ENCODE measurements at regions of chr12 and their contacts with region 1.

Region 1: GRCh38 chr12:112900299-112901145 is 6.2 kb upstream of the OAS1 start:
- DNase-seq: peak; percentile 39 to 59 (median 45)
- H3K4me3 ChIP-seq: no peak overlapping the region
- H3K4me3 Mint-ChIP-seq: peak overlapping the region in 1 of 8 donors; percentile 2
- H3K27ac ChIP-seq: no peak overlapping the region
- H3K27ac Mint-ChIP-seq: peak overlapping the region in 6 of 7 donors; percentile 13 to 70 (median 58)
- H3K4me1 ChIP-seq: peaks cover 23% of the 10 kb centered on the region
- H3K4me1 Mint-ChIP-seq: peaks cover 18 to 39% (median 24%) of the 10 kb centered on the region in 4 donors
- H3K27me3 ChIP-seq: no peaks in the 10 kb centered on the region
- H3K27me3 Mint-ChIP-seq: peaks cover 0 to 7% of the 10 kb centered on the region in 2 donors

Region 2: DNA sequence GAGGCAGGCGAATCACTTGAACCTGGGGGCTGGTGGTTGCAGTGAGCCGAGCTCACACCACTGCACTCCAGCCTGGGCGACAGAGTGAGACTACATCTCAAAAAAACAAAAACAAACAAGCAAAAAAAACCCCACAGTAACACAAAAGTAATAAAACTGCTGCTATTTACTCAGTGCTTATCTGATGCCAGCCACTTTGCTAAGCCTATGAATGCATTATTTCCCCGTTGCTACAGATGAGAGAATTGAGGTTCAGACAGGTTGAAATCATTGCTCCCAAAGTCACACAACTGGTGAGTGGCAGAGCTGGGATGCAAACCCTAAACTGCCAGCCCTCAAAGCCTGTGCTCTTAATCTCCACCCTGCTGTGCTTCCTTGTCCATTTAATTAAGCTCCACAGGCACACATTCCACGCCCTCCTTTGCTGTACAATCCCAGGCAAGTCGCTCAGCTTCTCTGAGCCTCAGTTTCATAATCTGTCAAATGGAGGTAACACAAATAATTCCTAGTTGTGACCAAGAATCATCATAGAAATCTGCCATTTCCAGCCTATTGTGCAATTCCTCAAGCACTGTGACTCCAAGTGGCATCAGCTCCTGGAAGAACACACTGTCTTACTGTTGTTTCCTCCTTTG is 32.1 kb after region 1 on chr12:
- CTCF ChIA-PET with region 1: interaction called, 14 read pairs
- POLR2A ChIA-PET with region 1: interaction called, 10 read pairs
- intact Hi-C with region 1: no loop called
- DNase-seq: no peak
- H3K4me3 ChIP-seq: no peak overlapping the region
- H3K4me3 Mint-ChIP-seq: no peak overlapping the region
- H3K27ac ChIP-seq: no peak overlapping the region
- H3K27ac Mint-ChIP-seq: peak overlapping the region in 4 of 7 donors; percentile 5 to 79 (median 62)
- H3K4me1 ChIP-seq: peaks cover 5% of the 10 kb centered on the region
- H3K4me1 Mint-ChIP-seq: peaks cover 6 to 14% (median 11%) of the 10 kb centered on the region in 4 donors
- H3K27me3 ChIP-seq: no peaks in the 10 kb centered on the region
- H3K27me3 Mint-ChIP-seq: no peaks in the 10 kb centered on the region

Region 3: DNA sequence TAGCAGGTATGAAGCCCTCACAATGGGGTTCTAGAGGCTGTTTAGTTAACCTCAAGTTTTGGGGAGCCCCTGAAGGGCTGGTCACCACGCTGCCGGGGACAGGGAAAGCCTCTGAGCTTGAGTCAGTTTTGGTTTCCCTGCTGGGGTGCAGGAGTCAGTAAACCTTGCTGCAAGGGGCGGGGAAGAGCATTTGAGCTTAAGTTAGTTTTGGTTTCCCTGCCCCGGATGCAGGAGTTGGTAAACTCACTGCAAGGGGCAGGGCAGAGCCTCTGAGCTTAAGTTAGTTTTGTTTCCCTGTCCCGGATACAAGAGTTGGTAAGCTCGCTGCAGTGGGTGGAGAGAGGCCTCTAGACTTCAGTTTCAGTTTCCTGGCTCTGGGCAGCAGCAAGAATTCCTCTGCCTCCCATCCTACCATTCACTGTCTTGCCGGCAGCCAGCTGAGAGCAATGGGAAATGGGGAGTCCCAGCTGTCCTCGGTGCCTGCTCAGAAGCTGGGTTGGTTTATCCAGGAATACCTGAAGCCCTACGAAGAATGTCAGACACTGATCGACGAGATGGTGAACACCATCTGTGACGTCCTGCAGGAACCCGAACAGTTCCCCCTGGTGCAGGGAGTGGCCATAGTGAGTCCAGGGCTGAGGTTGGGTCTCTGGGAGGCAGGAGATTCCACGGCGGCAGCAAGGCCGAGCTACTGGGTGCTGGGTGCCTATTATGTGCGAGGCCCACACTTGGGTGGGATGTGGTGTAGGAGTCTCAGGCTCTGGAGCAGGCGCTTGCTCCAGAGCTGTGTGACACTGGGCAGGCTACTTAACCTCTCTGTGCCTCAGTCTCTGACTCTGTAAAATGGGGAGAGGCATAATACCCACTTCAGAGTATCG is 77.9 kb after region 1 on chr12 and contains the start of gene OAS2:
- CTCF ChIA-PET with region 1: interaction called, 43 read pairs
- POLR2A ChIA-PET with region 1: interaction called, 144 read pairs
- intact Hi-C with region 1: loop called (anchors 1 kb)
- DNase-seq: peak; percentile 82 to 92 (median 87)
- H3K4me3 ChIP-seq: peak within 1 kb of the TSS; percentile 87 to 88
- H3K4me3 Mint-ChIP-seq: peak within 1 kb of the TSS; percentile 88 to 100 (median 99)
- H3K27ac ChIP-seq: peak within 1 kb of the TSS; percentile 91
- H3K27ac Mint-ChIP-seq: peak within 1 kb of the TSS; percentile 97 to 99 (median 99)
- H3K4me1 ChIP-seq: peaks cover 51% of the 10 kb centered on the region
- H3K4me1 Mint-ChIP-seq: peaks cover 28 to 58% (median 45%) of the 10 kb centered on the region in 4 donors
- H3K27me3 ChIP-seq: no peaks in the 10 kb centered on the region
- H3K27me3 Mint-ChIP-seq: no peaks in the 10 kb centered on the region
- total RNA-seq, gene OAS2: 73.5 to 77.4 TPM

Region 4: GRCh38 chr12:113030875-113031525 is 130.5 kb after region 1 on chr12:
- CTCF ChIA-PET with region 1: interaction called, 72 read pairs
- POLR2A ChIA-PET with region 1: no interaction called
- intact Hi-C with region 1: loop called (anchors 1 kb)
- DNase-seq: peak in 4 of 5 donors; percentile 24 to 35 (median 32)
- H3K4me3 ChIP-seq: no peak overlapping the region
- H3K4me3 Mint-ChIP-seq: no peak overlapping the region
- H3K27ac ChIP-seq: no peak overlapping the region
- H3K27ac Mint-ChIP-seq: no peak overlapping the region
- H3K4me1 ChIP-seq: no peaks in the 10 kb centered on the region
- H3K4me1 Mint-ChIP-seq: peaks cover 0 to 5% (median 3%) of the 10 kb centered on the region in 4 donors
- H3K27me3 ChIP-seq: no peaks in the 10 kb centered on the region
- H3K27me3 Mint-ChIP-seq: peaks cover 0 to 5% of the 10 kb centered on the region in 2 donors

Region 5: DNA sequence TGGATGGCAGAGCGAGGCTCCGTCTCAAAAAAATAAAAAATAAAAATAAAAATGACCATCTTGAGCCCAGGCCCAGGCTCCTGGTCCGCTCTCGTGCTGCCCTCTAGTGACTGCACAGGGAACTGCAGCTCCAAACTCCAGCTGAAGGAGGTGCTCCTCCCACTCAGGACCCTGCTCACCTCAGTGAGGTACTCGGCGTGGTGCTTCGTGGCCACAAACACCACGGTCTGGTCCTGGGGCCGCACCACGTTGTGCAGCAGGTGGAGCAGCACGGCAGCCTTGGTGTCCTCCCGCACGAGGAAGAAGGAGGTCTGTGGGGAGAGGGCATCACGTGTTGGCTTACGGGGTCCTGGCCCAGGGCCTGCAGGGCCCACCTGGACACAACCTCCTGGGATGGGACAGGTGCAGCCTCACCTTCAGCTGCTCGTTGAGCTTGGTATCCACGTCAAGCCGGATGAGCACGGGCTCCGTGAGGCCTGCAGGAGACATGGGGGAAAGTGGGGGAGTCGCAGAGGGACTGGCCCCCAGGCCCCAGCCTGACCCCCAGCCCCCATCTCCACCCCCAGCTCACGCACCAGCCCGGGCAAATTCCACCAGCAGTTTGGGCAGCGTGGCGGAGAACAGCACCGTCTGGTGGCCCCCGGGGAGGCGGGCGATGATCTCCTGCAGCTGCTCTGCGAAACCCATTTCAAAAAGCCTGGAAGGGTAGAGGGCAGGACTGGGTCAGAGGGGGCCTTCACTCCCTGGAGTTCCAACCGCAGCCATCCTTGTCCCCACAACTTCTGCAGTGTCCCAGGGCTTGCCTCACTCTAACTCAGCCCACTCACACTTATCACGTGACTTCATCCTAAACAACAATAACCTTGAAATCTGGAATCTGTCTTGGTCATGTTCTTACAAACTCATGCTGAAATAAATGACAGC is 274.2 kb after region 1 on chr12:
- CTCF ChIA-PET with region 1: interaction called, 10 read pairs
- POLR2A ChIA-PET with region 1: no interaction called
- intact Hi-C with region 1: no loop called
- DNase-seq: peak; percentile 67 to 72 (median 68)
- H3K4me3 ChIP-seq: no peak overlapping the region
- H3K4me3 Mint-ChIP-seq: no peak overlapping the region
- H3K27ac ChIP-seq: no peak overlapping the region
- H3K27ac Mint-ChIP-seq: peak overlapping the region in 4 of 7 donors; percentile 42 to 80 (median 66)
- H3K4me1 ChIP-seq: no peaks in the 10 kb centered on the region
- H3K4me1 Mint-ChIP-seq: peaks cover 2 to 7% (median 4%) of the 10 kb centered on the region in 4 donors
- H3K27me3 ChIP-seq: no peaks in the 10 kb centered on the region
- H3K27me3 Mint-ChIP-seq: no peaks in the 10 kb centered on the region

Measured in CD4-positive, alpha-beta memory T cell (primary cell).